ENCODE measurements at regions of chr12 and their contacts with region 1.

Region 1: DNA sequence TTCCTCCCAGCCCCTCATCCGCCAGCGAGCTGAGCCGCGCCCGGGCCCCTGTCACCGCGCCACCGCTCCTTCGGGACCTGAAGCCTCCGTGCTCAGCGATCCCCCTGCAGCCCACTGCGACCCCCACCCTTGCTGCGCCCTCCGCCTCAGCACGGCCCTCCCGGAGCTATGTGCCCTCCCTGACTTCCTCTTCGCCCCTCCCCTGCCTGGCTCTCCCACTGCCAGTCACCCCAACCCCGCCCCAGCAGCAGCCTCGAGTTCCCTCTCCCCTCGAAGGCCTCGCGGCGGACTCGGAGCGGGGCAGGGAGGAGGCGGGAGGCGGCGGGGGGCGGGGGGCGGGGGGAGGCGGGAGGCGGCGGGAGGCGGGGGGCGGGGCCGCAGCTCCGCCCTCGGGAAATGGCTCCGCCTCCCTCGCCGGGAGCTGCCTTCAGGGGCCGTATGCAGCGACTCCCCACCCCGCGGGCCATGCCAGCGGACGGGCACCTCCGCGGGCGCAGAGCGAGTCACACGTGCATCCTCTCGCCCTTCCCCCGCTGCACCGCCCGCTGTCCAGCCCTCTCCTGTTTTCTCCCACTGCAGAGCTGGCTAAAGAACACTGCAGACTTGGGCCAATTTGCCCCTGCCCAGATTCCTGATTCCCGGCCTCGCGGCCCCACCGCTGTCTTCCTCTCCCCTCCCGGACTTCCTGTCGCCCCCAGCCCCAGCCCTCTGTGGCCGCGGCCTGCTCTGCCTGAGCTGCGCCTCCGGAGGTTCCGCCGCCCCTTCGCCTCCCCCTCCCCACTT is 29.1 kb upstream of the ADIPOR2 start:
- DNase-seq: peak; percentile 89

Region 2: DNA sequence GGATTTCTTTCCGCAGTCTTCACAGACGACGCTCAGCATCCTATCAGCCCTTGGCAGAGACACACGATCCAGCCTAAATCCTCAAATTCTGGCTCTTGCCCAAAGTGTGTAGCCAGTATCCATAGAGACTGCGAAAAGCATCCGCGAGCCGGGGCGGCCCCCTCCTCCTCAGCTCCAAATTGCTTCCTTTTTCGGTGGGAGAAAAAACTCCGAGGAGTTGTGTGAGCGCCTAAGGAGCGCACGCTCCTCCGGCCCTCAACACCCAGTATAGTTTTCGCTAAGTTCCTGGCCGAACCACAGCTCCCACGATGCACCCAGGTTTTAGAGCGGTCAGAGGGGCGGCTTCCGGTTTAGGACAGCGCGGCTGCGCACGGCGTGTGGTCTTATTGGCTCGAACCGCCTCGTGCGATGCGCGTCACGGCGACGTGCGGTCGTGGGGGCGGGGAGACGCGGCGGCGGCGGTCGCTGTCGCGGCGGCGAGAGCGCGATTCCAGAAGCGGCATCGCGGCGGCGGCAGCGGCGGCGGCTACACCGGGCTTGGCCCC is 28.9 kb after region 1 on chr12 and contains the start of gene ADIPOR2:
- CTCF ChIA-PET with region 1: no interaction called
- POLR2A ChIA-PET with region 1: interaction called, 17 read pairs
- DNase-seq: peak; percentile 93

Region 3: DNA sequence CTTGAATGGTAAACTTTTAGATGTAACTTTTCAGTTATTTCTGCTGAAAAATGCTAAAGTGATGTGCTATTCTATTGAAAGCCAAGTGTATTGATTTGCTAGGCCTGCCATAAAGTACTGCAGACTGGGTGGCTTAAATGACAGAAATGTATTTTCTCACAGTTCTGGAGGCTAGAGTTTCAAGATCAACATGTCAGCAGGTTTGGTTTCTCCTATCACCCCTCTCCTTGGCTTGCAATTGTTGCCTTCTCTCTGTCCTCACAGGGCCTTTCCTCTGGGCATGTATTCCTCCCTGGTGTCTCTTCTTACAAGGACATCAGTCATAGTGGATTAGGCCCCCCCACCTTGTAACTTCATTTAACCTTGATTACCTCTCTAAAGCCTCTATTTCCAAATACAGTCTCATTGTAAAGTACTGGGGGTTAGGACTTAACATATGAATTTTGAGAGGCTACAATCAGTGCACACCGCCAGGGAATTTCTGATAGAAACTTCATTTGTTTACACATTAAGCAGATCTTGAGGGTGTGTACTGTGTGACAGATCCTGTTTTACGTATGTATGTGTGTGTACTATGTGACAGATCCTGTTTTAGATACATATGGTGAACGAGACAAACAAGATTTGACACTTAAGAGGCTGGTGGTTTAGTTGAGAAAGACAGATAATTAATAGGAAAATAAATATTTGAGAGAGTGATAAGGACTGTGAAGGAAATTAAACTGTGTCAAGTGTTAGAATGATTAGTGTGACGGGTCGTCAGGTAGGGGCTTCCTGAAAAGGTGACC is 78.6 kb after region 1 on chr12:
- CTCF ChIA-PET with region 1: no interaction called
- POLR2A ChIA-PET with region 1: no interaction called
- DNase-seq: no peak

Measured in HEK293T (cell line).